Tibial artery (tissue), 4 donors: ENCODE measurements at regions of chr7 and their contacts with region 1.

Region 1: DNA sequence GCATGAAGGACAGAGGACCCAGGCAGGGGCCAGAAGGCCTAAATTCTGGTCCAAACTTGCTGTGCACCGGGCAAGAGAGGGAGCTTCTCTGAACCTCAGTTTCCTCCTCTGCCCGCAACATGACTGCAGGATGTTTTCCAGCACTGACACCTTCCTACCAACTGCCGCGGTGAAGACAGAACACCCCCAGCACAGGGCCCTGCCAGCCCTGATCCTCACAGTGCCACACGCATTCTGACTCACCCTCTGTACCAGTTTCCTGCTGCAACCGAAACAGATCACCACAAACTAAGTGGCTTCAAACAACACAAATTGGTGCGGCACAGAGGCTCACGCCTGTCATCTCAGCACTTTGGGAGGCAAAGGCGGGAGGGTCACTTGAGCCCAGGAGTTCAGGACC is 18.1 kb downstream of the MAD1L1 start:
- DNase-seq: no peak
- H3K4me3 ChIP-seq: no peak overlapping the region
- H3K27ac ChIP-seq: no peak overlapping the region
- H3K4me1 ChIP-seq: no peaks in the 10 kb centered on the region
- H3K27me3 ChIP-seq: no peaks in the 10 kb centered on the region
- CTCF ChIP-seq: no peak

Region 2: GRCh38 chr7:1664711-1665548 is 549.7 kb before region 1 on chr7:
- intact Hi-C with region 1: loop called (anchors 5 kb)
- DNase-seq: peak; percentile 39 to 67
- H3K4me3 ChIP-seq: peak overlapping the region; percentile 43 to 60
- H3K27ac ChIP-seq: no peak overlapping the region
- H3K4me1 ChIP-seq: peaks cover 0 to 50% (median 44%) of the 10 kb centered on the region in 4 donors
- H3K27me3 ChIP-seq: peaks cover 0 to 84% of the 10 kb centered on the region in 2 donors
- CTCF ChIP-seq: peak; percentile 55 to 71

Region 3: GRCh38 chr7:2157468-2158279 is 57.0 kb before region 1 on chr7:
- intact Hi-C with region 1: no loop called
- DNase-seq: peak; percentile 65 to 81
- H3K4me3 ChIP-seq: no peak overlapping the region
- H3K27ac ChIP-seq: peak overlapping the region; percentile 62 to 77
- H3K4me1 ChIP-seq: peaks cover 0 to 28% (median 18%) of the 10 kb centered on the region in 4 donors
- H3K27me3 ChIP-seq: no peaks in the 10 kb centered on the region
- CTCF ChIP-seq: no peak